ENCODE measurements at regions of chr5 and their contacts with region 1.

Region 1: GRCh38 chr5:150398722-150399523 is 13.8 kb downstream of the CD74 start:
- DNase-seq: peak in 5 of 14 experiments; percentile 17 to 69 (median 27)
- ATAC-seq: peak; percentile 62
- H3K4me3 ChIP-seq: no peak overlapping the region
- H3K4me3 Mint-ChIP-seq: no peak overlapping the region
- H3K27ac ChIP-seq: no peak overlapping the region
- H3K27ac Mint-ChIP-seq: peak overlapping the region; percentile 65
- H3K4me1 ChIP-seq: no peaks in the 10 kb centered on the region
- H3K4me1 Mint-ChIP-seq: no peaks in the 10 kb centered on the region
- H3K27me3 ChIP-seq: no peaks in the 10 kb centered on the region
- H3K27me3 Mint-ChIP-seq: no peaks in the 10 kb centered on the region
- CTCF ChIP-seq: no peak

Region 2: GRCh38 chr5:149951135-149951749 is 447.7 kb before region 1 on chr5:
- CTCF ChIA-PET with region 1: no interaction called
- POLR2A ChIA-PET with region 1: no interaction called
- intact Hi-C with region 1: no loop called
- DNase-seq: no peak
- ATAC-seq: no peak
- H3K4me3 ChIP-seq: no peak overlapping the region
- H3K4me3 Mint-ChIP-seq: no peak overlapping the region
- H3K27ac ChIP-seq: no peak overlapping the region
- H3K27ac Mint-ChIP-seq: no peak overlapping the region
- H3K4me1 ChIP-seq: no peaks in the 10 kb centered on the region
- H3K4me1 Mint-ChIP-seq: no peaks in the 10 kb centered on the region
- H3K27me3 ChIP-seq: peaks cover 0 to 2% of the 10 kb centered on the region in 2 experiments
- H3K27me3 Mint-ChIP-seq: peaks cover 6% of the 10 kb centered on the region
- CTCF ChIP-seq: no peak

Region 3: GRCh38 chr5:150409638-150410523 is 11.0 kb after region 1 on chr5:
- CTCF ChIA-PET with region 1: interaction called, 19 read pairs
- POLR2A ChIA-PET with region 1: interaction called, 18 read pairs
- intact Hi-C with region 1: no loop called
- DNase-seq: peak in 10 of 14 experiments; percentile 16 to 77 (median 38)
- ATAC-seq: no peak
- H3K4me3 ChIP-seq: peak overlapping the region; percentile 97
- H3K4me3 Mint-ChIP-seq: peak overlapping the region; percentile 99
- H3K27ac ChIP-seq: peak overlapping the region; percentile 94 to 98
- H3K27ac Mint-ChIP-seq: peak overlapping the region; percentile 98
- H3K4me1 ChIP-seq: peaks cover 65% of the 10 kb centered on the region
- H3K4me1 Mint-ChIP-seq: peaks cover 40% of the 10 kb centered on the region
- H3K27me3 ChIP-seq: no peaks in the 10 kb centered on the region
- H3K27me3 Mint-ChIP-seq: no peaks in the 10 kb centered on the region
- CTCF ChIP-seq: no peak